PC-9 (cell line): ENCODE measurements at regions of chr12 and their contacts with region 1.

Region 1: DNA sequence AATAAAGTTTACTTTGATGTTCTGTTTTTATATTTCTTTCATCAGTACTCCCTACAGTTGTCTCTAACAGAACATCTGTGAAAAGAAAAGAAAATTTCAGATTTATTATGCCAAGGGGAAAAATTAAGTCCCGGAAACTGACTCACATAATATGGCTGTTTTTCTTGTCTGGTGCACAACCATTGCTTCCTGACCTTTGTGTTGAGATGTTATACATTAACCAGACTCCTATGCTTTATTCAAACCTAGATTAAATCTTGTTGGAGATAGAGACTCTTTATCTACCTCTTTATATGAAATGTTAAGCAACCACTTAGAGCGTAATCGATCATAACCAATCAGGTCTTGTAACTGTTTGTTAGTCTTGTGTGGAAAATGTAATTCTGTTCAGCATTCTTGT is 37.6 kb upstream of the BICD1 start:
- DNase-seq: no peak
- H3K4me3 ChIP-seq: no peak overlapping the region
- H3K27ac ChIP-seq: no peak overlapping the region
- H3K4me1 ChIP-seq: no peaks in the 10 kb centered on the region
- H3K27me3 ChIP-seq: no peaks in the 10 kb centered on the region
- CTCF ChIP-seq: no peak

Region 2: GRCh38 chr12:32843528-32844095 is 774.5 kb after region 1 on chr12:
- CTCF ChIA-PET with region 1: no interaction called
- POLR2A ChIA-PET with region 1: interaction called, 12 read pairs
- intact Hi-C with region 1: no loop called
- DNase-seq: peak in 1 of 2 experiments; percentile 49
- H3K4me3 ChIP-seq: no peak overlapping the region
- H3K27ac ChIP-seq: peak overlapping the region; percentile 30
- H3K4me1 ChIP-seq: peaks cover 11% of the 10 kb centered on the region
- H3K27me3 ChIP-seq: no peaks in the 10 kb centered on the region
- CTCF ChIP-seq: no peak